Activated T-helper 1 cell treated with anti-CD3 and anti-CD28 coated beads, Interleukin-12 subunit alpha, Interleukin-12 subunit beta, Interleukin-2, Interleukin-4 antibody, amounts not matched to agents 30 ng/mL and 10 ng/mL and 1 ng/mL, durations not matched to agents 14 hours and 24 hours and 36 hours (primary cell): ENCODE measurements at regions of chr2 and their contacts with region 1.

Region 1: GRCh38 chr2:231925303-231926179 is 655 bp downstream of the NPPC start:
- DNase-seq: peak; percentile 54
- H3K4me3 Mint-ChIP-seq: no peak overlapping the region
- H3K27ac Mint-ChIP-seq: no peak overlapping the region
- H3K4me1 Mint-ChIP-seq: no peaks in the 10 kb centered on the region
- H3K27me3 Mint-ChIP-seq: peaks cover 49% of the 10 kb centered on the region

Region 2: DNA sequence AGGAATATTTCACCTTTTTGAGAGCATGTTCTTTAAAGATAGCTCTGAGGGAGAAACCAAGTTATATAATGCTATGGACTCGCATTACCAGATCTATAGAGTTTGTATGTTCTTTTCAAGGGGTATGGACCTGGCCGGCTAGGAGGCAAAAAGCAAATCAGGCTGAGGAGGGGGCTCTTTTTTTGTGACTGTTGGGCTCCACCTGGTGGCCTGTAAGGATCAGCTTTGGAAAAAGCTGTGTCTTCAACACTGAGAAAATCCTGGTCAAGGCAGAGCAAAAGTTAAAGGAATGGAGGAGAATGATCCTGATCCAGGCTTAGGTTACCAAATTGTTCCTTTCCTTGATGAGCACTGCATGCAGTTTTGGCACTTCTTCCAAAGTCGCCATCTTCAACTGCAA is 216.5 kb after region 1 on chr2:
- intact Hi-C with region 1: loop called (anchors 1 kb)
- DNase-seq: no peak
- H3K4me3 Mint-ChIP-seq: no peak overlapping the region
- H3K27ac Mint-ChIP-seq: no peak overlapping the region
- H3K4me1 Mint-ChIP-seq: peaks cover 12% of the 10 kb centered on the region
- H3K27me3 Mint-ChIP-seq: no peaks in the 10 kb centered on the region

Region 3: GRCh38 chr2:232204457-232204931 is 279.0 kb after region 1 on chr2:
- intact Hi-C with region 1: no loop called
- DNase-seq: no peak
- H3K4me3 Mint-ChIP-seq: no peak overlapping the region
- H3K27ac Mint-ChIP-seq: no peak overlapping the region
- H3K4me1 Mint-ChIP-seq: no peaks in the 10 kb centered on the region
- H3K27me3 Mint-ChIP-seq: no peaks in the 10 kb centered on the region

Region 4: DNA sequence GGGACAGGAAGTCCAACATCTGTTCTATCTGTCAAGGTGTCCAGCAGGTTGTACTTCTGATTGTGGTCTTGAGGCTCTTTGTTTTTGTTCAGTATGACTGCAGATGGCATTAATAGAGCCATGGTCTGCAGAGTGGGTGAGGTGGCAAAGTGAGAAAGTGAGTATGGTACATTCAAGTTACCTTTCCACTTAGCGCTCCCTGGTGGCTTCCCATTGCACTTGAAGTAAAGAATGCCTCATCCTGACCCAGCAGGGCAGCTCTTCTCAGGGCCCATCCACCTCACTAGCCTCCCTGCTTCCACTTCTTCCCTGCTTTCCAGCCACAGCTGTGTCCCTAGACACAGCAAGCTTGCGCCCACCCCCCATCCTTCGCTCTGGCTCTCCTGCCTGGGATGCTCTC is 305.0 kb after region 1 on chr2:
- intact Hi-C with region 1: loop called (anchors 5 kb)
- DNase-seq: no peak
- H3K4me3 Mint-ChIP-seq: no peak overlapping the region
- H3K27ac Mint-ChIP-seq: no peak overlapping the region
- H3K4me1 Mint-ChIP-seq: peaks cover 14% of the 10 kb centered on the region
- H3K27me3 Mint-ChIP-seq: no peaks in the 10 kb centered on the region

Region 5: DNA sequence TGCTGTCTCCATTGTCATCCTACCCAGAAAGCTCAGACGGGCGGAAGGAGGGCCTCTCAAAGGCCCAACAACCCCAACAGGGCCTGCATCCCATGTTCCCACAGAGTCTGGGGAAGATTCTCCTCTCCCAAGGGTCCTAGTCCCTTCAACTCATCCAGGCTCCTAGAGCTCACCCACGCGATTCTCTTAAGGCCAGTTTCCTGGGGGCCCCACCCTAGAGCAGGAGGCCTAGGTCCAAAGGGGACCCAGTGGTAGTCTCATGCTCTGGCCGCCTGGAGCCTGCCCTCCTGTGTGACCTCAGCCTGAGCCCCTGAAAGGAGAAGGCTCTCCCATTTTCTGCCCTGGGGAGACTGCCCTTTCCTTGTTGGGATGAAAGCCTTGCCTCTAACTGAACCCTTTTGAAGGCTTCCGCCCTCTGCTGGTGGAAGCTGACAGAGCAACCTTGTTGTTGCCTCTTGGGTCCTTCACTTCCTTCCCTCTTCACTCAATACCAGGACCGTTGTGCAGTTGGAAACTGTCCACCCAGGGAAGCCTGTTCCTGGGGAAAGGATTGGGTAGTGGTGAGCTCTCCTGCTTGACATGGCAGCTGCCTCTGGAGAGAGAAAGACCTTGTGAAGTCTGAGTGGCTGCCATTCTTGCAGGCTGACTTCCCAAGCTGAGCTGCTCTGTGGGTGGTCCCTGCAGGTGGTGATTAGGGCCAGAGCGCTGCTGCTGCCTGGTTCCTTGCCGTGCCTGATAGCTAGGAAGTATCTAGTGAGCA is 367.0 kb after region 1 on chr2:
- intact Hi-C with region 1: loop called (anchors 1 kb)
- DNase-seq: peak; percentile 45
- H3K4me3 Mint-ChIP-seq: no peak overlapping the region
- H3K27ac Mint-ChIP-seq: no peak overlapping the region
- H3K4me1 Mint-ChIP-seq: no peaks in the 10 kb centered on the region
- H3K27me3 Mint-ChIP-seq: no peaks in the 10 kb centered on the region

Region 6: DNA sequence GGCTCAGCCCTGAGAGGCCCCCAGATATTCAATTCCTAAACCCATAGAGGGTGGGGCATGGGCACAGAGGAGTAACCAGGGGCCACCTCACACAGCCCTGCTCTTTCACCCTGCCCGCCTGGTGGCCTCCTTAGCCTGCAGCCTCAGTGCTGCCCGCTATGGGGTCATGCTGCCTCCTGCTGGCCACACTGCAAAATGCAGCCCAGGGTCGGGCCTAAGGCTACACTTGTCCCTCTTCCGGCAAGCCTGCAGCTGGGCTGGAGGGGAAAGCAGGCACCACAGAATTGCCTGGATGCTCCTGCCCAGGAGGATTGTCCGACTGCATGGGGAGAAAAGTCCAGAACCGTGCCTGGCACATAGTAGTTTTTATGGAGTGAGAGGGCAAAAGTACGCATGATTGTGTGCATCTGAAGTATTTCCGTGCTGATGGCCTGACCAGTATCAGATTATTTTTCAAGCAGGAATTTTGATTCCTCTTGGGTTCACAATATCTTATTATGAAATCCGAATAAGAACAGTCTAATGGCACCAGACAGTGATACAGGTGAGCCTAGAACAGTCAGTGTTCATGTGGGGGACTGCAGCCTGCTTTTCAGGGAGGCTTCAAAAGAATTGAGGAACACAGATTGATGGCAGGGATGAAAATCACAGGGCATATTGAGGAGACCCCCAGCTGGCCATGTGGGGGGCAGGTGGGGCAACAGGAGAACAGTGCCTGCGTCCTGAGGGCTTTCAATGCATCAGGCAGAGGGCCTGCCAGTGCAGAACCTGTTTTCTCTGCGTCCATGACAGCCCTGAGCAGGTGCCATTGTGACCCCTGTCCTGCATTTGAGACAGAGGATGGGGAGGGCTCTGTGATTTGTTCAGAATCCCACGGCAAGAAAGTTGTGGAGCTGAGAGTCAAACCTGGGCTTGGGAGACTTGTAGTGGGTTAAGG is 401.8 kb after region 1 on chr2:
- intact Hi-C with region 1: loop called (anchors 1 kb)
- DNase-seq: peak; percentile 75
- H3K4me3 Mint-ChIP-seq: no peak overlapping the region
- H3K27ac Mint-ChIP-seq: no peak overlapping the region
- H3K4me1 Mint-ChIP-seq: peaks cover 11% of the 10 kb centered on the region
- H3K27me3 Mint-ChIP-seq: no peaks in the 10 kb centered on the region

Region 7: GRCh38 chr2:232444409-232445148 is 519.0 kb after region 1 on chr2:
- intact Hi-C with region 1: loop called (anchors 1 kb)
- DNase-seq: peak; percentile 57
- H3K4me3 Mint-ChIP-seq: no peak overlapping the region
- H3K27ac Mint-ChIP-seq: no peak overlapping the region
- H3K4me1 Mint-ChIP-seq: peaks cover 4% of the 10 kb centered on the region
- H3K27me3 Mint-ChIP-seq: peaks cover 2% of the 10 kb centered on the region

Region 8: GRCh38 chr2:232521959-232522622 is 596.5 kb after region 1 on chr2:
- intact Hi-C with region 1: loop called (anchors 10 kb)
- DNase-seq: peak; percentile 45
- H3K4me3 Mint-ChIP-seq: no peak overlapping the region
- H3K27ac Mint-ChIP-seq: no peak overlapping the region
- H3K4me1 Mint-ChIP-seq: no peaks in the 10 kb centered on the region
- H3K27me3 Mint-ChIP-seq: peaks cover 23% of the 10 kb centered on the region